ENCODE measurements at regions of chr7 and their contacts with region 1.

Region 1: GRCh38 chr7:88101769-88102168 is 118.1 kb downstream of the SRI start:
- DNase-seq: no peak
- H3K4me3 ChIP-seq: no peak overlapping the region
- H3K27ac ChIP-seq: no peak overlapping the region
- H3K27me3 ChIP-seq: no peaks in the 10 kb centered on the region
- CTCF ChIP-seq: no peak

Region 2: GRCh38 chr7:87806150-87806549 is 295.6 kb before region 1 on chr7:
- intact Hi-C with region 1: loop called in 1 of 2 experiments (anchors 10 kb)
- DNase-seq: no peak
- H3K4me3 ChIP-seq: no peak overlapping the region
- H3K27ac ChIP-seq: no peak overlapping the region
- H3K27me3 ChIP-seq: no peaks in the 10 kb centered on the region
- CTCF ChIP-seq: no peak